PC-9 (cell line): ENCODE measurements at regions of chr9 and their contacts with region 1.

Region 1: GRCh38 chr9:33473643-33474352 is at the start of gene NOL6:
- DNase-seq: peak; percentile 93
- H3K4me3 ChIP-seq: peak within 1 kb of the TSS; percentile 80
- H3K27ac ChIP-seq: no peak within 1 kb of the TSS
- H3K4me1 ChIP-seq: 0 out of 2 replicates have a peak, but pooled peaks cover 10% of the 10 kb centered on the region
- H3K27me3 ChIP-seq: no peaks in the 10 kb centered on the region
- CTCF ChIP-seq: no peak
- total RNA-seq, gene NOL6: 15.5 and 16.2 TPM in 2 replicates

Region 2: DNA sequence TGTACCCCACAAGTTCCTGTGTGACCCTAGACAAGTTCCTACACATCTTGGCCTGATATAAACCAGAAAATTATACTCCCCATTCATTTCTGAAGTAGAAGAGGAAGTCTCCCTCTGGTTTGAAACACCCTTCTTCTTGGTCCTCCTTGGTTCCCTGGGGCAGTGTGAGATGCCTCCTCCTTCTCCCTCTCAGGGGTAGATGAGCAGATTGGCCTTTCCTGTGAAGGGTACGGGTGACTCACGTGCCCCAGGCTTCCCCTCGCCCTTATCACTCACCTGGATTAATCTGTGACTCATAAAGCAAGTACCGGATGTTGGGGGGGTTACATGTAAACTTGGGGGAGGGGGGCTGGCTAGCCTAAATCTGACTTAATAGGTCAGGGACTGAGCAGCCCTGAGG is 15.4 kb before region 1 on chr9:
- CTCF ChIA-PET with region 1: interaction called, 4 read pairs
- POLR2A ChIA-PET with region 1: interaction called, 14 read pairs
- intact Hi-C with region 1: no loop called
- DNase-seq: peak; percentile 63 to 86
- H3K4me3 ChIP-seq: no peak overlapping the region
- H3K27ac ChIP-seq: peak overlapping the region; percentile 65
- H3K4me1 ChIP-seq: peaks cover 29% of the 10 kb centered on the region
- H3K27me3 ChIP-seq: no peaks in the 10 kb centered on the region
- CTCF ChIP-seq: no peak

Region 3: DNA sequence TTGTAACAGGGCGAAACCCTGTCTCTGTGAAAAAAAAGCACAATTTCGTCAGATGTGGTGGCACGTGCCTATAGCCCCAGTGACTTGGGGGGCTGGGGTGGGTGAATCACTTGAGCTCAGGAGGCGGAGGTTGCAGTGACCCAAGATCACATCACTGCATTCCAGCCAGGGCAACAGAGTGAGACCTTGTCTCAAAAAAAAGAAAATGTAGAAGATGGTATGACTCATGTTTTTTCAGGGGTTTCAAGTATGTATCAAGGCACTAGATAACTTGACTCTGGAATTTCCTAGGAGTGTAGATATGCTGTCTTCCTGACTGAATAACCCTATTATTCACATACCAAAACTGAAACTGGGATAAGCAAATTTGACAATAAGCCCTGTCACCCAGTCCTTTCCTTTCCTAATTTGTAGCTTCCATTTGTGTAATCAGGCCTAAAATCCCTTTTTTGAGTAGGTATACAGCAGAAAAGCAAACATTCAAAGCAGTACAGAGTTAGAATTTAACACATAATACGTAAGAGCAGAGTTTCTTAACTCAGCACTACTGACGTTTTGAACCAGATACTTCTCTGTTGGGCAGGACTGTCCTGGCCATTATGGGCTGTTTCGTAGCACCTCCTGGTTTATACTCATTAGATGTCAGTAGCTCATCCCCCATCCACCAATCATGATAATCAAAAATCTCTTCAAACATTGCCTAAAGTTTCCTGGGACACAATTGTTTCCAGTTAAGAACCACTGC is 33.0 kb after region 1 on chr9:
- CTCF ChIA-PET with region 1: no interaction called
- POLR2A ChIA-PET with region 1: interaction called, 10 read pairs
- intact Hi-C with region 1: no loop called
- DNase-seq: peak; percentile 76 to 93
- H3K4me3 ChIP-seq: peak overlapping the region; percentile 33; the same call in 1 of the 2 replicates
- H3K27ac ChIP-seq: peak overlapping the region; percentile 98
- H3K4me1 ChIP-seq: peaks cover 21% of the 10 kb centered on the region
- H3K27me3 ChIP-seq: no peaks in the 10 kb centered on the region
- CTCF ChIP-seq: no peak

Region 4: DNA sequence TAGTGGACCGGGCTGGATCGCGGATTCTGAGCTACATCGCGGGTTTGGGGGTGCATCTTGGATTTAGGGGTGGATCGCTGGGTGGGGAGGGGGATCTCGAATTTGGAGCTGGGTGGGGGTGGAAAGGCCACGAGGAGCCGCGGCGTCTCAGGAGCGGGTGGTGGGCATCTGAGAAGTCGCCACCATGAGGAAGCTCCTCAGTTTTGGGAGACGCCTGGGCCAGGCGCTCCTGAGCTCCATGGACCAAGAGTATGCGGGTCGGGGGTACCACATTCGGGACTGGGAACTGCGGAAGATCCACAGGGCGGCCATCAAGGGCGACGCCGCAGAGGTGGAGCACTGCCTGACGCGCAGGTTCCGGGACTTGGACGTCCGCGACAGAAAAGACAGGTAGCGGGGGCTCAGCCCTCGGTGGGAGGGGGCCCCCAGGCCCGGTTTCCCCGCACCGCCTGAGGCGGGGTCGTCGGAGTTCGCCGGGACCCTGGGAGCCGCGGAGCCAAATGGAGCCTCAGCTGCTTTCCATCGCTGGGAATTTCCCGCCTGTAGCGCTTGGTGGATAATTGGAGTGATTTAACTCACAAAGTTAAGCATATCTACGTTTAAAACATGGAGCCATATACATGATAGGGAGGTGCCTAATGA is 50.6 kb after region 1 on chr9:
- CTCF ChIA-PET with region 1: no interaction called
- POLR2A ChIA-PET with region 1: interaction called, 11 read pairs
- intact Hi-C with region 1: no loop called
- DNase-seq: peak in 1 of 2 experiments; percentile 2
- H3K4me3 ChIP-seq: peak overlapping the region; percentile 69
- H3K27ac ChIP-seq: no peak overlapping the region
- H3K4me1 ChIP-seq: no peaks in the 10 kb centered on the region
- H3K27me3 ChIP-seq: no peaks in the 10 kb centered on the region
- CTCF ChIP-seq: no peak

Region 5: DNA sequence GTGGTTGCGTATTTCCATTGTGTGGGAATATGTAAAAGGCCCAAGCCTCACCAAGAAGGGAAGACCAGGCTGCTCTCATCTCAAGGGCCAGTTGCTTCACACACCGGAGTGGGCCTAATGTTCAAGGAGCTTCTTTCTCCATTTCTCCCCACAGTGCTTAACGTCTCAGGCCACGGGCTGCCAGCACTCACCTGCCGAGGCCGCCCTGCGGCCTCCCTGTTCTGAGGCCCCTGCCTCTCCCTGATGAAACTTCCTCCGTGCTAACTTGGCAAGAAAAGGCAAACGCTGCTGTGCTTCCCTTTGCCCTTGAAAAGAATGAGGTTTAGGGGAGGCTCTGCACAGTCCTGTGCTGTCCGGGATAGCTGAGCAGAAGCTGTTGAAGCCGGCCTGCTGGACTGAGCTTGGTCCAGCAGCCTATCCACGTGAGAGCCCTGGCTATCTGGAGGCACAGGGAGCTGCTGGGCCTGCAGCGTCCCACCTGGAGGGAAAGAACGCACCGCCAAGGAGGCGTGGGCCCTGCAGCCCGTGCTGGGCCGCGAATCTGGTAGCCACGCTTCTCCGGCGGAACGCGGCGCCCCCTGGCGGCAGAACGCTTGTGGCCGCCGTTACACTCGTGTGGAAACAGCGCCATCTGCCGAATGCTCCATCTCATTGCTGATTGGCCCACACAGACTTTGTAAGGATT is 248.0 kb after region 1 on chr9:
- CTCF ChIA-PET with region 1: no interaction called
- POLR2A ChIA-PET with region 1: no interaction called
- intact Hi-C with region 1: loop called (anchors 10 kb)
- DNase-seq: peak; percentile 55 to 81
- H3K4me3 ChIP-seq: no peak overlapping the region
- H3K27ac ChIP-seq: no peak overlapping the region
- H3K4me1 ChIP-seq: no peaks in the 10 kb centered on the region; the same call in 1 of the 2 replicates
- H3K27me3 ChIP-seq: no peaks in the 10 kb centered on the region
- CTCF ChIP-seq: peak; percentile 93

Region 6: DNA sequence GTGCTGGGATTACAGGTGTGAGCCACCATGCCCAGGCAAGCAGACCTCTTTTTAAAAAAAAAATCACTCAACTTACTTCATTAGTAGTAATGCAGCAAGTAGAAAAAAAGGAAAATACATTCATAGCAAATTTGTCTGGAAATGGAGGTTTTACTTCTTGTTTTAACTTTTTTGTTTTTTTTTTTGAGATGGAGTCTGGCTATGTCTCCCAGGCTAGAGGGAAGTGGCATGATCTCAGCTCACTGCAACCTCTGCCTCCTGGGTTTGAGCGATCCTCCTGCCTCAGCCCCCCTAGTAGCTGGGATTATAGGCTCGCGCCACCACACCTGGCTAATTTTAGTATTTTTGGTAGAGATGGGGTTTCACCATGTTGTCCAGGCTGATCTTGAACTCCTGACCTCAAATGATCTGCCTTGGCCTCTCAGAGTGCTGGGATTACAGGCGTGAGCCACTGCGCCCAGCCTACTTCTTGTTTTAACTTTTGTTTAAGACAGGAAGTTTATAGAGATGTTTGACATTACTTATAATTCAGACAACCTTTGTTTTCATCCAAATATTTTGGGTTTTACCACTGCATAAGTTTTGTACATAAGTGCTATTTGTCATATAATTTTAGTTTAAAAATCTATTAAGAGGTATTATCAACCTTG is 369.6 kb after region 1 on chr9:
- CTCF ChIA-PET with region 1: no interaction called
- POLR2A ChIA-PET with region 1: no interaction called
- intact Hi-C with region 1: no loop called
- DNase-seq: no peak
- H3K4me3 ChIP-seq: no peak overlapping the region
- H3K27ac ChIP-seq: no peak overlapping the region
- H3K4me1 ChIP-seq: no peaks in the 10 kb centered on the region
- H3K27me3 ChIP-seq: no peaks in the 10 kb centered on the region
- CTCF ChIP-seq: no peak